PC-3 (cell line): ENCODE measurements at regions of chr4 and their contacts with region 1.

Region 1: DNA sequence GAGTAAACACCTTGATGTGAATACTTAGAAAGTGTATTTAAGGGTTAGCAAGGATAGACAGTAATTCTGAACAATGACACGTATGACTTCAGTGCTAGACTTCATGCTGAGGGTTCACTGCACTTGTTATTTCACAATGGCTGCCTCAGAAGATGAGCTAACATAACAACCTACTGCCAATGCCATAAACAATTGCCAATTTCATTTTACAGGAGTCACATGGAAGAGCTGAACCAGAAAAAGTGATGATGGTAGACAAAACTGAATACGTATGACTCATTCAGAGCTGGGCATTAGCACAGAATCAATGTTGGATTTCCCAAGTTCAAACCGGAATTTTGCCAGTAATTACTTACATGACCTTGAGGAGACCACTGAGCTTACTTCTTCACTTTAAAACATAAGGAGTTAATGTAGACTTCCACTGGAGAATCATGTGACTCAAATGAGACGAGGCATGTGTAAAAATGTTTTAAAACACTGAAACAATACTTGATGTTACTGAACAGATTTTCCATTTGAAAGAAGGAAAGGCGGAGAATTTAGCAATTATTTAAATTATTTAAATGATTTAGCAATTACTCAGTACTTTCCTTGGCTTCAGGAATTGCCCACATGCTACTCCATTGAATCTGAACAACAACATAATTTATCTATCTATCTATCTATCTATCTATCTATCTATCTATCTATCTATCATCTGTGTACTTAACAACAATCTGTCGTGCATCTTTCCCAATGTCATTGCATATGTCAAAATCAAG is 868.5 kb upstream of the SLIT2 start:
- DNase-seq: peak; percentile 55
- ATAC-seq: no peak
- H3K4me3 ChIP-seq: no peak overlapping the region
- H3K27ac ChIP-seq: no peak overlapping the region
- H3K4me1 ChIP-seq: peaks cover 44% of the 10 kb centered on the region
- H3K27me3 ChIP-seq: no peaks in the 10 kb centered on the region
- CTCF ChIP-seq: no peak

Region 2: GRCh38 chr4:19368800-19369199 is 14.4 kb before region 1 on chr4:
- CTCF ChIA-PET with region 1: no interaction called
- POLR2A ChIA-PET with region 1: no interaction called
- intact Hi-C with region 1: no loop called
- DNase-seq: no peak
- ATAC-seq: no peak
- H3K4me3 ChIP-seq: no peak overlapping the region
- H3K27ac ChIP-seq: no peak overlapping the region
- H3K4me1 ChIP-seq: no peaks in the 10 kb centered on the region
- H3K27me3 ChIP-seq: no peaks in the 10 kb centered on the region
- CTCF ChIP-seq: no peak

Region 3: DNA sequence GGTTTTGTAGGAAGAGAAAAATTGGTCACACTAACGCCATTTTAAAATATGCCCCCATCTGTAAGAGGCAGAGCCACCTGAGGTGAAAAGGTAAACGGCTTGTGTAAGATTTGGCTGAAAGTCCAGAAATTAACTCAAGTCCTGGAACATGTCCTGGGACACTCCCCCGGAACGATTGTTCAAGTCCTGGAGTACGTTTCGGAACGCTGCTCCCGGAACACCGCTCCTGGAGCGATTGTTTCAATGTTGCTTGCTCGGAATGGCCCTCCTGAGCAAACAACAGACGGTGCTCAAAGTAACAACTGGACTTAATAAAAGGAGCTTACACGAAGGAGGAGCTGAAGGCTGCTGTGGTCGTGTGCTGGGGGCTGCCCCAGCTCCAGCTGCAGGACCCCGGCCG is 72.0 kb after region 1 on chr4:
- CTCF ChIA-PET with region 1: interaction called, 3 read pairs
- POLR2A ChIA-PET with region 1: no interaction called
- intact Hi-C with region 1: loop called (anchors 5 kb)
- DNase-seq: peak; percentile 72
- ATAC-seq: peak; percentile 37
- H3K4me3 ChIP-seq: peak overlapping the region; percentile 97
- H3K27ac ChIP-seq: peak overlapping the region; percentile 61
- H3K4me1 ChIP-seq: peaks cover 11% of the 10 kb centered on the region
- H3K27me3 ChIP-seq: no peaks in the 10 kb centered on the region
- CTCF ChIP-seq: no peak

Region 4: GRCh38 chr4:19739101-19739720 is 356.0 kb after region 1 on chr4:
- CTCF ChIA-PET with region 1: no interaction called
- POLR2A ChIA-PET with region 1: no interaction called
- intact Hi-C with region 1: loop called (anchors 2 kb)
- DNase-seq: peak; percentile 84
- ATAC-seq: peak; percentile 96
- H3K4me3 ChIP-seq: peak overlapping the region; percentile 60
- H3K27ac ChIP-seq: peak overlapping the region; percentile 98
- H3K4me1 ChIP-seq: peaks cover 29% of the 10 kb centered on the region
- H3K27me3 ChIP-seq: no peaks in the 10 kb centered on the region
- CTCF ChIP-seq: no peak

Region 5: GRCh38 chr4:19880206-19880605 is 497.0 kb after region 1 on chr4:
- CTCF ChIA-PET with region 1: no interaction called
- POLR2A ChIA-PET with region 1: no interaction called
- intact Hi-C with region 1: no loop called
- DNase-seq: no peak
- ATAC-seq: no peak
- H3K4me3 ChIP-seq: no peak overlapping the region
- H3K27ac ChIP-seq: no peak overlapping the region
- H3K4me1 ChIP-seq: peaks cover 8% of the 10 kb centered on the region; the same call in 1 of the 2 replicates
- H3K27me3 ChIP-seq: no peaks in the 10 kb centered on the region
- CTCF ChIP-seq: no peak